Right cardiac atrium (tissue), 5 donors: ENCODE measurements at regions of chr11 and their contacts with region 1.

Region 1: DNA sequence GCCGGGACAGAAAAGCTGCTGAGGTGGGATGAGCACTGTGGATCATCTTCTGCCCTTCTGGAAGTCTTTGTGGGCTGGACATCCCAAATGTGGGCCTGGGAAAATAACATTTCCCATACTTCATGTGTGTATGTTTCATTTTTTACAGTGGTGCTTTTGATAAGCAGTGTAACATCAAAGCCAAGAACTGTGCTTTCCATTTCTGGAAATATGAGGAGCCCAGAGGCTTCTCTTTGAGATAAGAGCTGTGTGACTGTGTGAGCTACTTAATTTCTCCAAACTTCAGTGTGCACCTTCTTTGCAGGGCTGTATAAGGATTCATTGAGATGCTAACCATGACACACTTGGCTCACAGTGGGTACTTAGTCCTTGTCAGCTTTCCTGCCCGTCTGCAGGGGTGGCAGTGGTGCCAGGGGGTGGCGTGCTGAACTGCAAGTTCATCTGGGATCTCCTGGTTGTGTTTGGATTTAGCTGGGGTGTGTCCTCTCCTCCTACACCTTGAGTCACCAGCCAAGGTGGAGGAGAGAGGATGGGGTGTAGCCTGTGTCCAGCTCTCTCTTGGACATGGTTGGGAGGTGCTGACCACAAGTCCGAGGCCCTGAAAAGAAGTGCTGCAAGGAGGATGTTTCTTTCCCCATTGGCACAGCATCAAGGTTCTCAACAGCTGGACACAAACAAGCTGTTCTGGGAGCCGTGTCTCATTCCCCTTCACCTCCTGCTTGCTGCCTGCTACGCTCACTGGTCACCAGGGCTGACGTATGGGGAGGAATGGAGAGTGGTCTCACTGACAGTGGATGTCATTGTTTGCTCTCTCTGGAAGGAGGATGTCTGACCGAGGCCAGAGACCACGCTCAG is 139.4 kb downstream of the TEAD1 start:
- DNase-seq: peak; percentile 41 to 69 (median 61)
- ATAC-seq: peak; percentile 28 to 49
- H3K4me3 ChIP-seq: no peak overlapping the region
- H3K27ac ChIP-seq: peak overlapping the region; percentile 43
- H3K4me1 ChIP-seq: peaks cover 40% of the 10 kb centered on the region
- H3K27me3 ChIP-seq: no peaks in the 10 kb centered on the region

Region 2: DNA sequence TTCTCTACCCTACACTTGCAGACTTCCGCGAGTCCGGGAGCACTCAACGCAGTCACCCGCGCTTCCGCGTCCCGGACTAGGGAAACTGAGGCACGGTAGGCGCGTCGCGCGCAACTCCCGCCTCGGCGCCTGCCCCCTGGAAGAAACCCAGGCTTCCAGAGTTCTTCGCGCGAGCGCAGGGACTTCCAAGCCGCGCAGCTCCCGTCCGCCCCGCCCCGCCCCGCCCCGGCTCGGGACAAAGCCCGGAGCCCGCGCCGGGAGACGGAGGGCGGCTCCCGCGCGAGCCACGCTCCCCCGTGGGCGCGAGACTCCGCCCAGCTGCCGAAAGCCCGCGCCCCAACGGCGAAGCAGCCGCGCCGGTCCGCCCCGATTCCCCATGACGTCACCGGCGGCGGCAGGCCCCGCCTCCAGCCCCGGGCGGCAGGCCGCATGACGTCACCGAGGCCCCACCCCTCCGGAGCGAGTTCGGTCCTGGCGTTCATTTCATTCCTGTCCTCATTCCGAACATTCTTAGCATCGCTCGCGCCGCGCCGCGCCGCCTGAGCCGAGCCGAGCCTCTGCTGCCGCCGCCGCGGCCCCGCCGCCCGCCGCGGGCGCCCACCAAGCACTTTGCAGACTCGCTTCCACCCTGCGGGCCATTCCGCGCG is 139.6 kb before region 1 on chr11 and contains the start of gene TEAD1:
- intact Hi-C with region 1: loop called in 1 of 4 experiments (anchors 5 kb)
- DNase-seq: peak; percentile 96 to 99 (median 98)
- ATAC-seq: peak; percentile 98
- H3K4me3 ChIP-seq: peak within 1 kb of the TSS; percentile 92
- H3K27ac ChIP-seq: peak within 1 kb of the TSS; percentile 93
- H3K4me1 ChIP-seq: no peaks in the 10 kb centered on the region
- H3K27me3 ChIP-seq: no peaks in the 10 kb centered on the region
- total RNA-seq, gene TEAD1: 81.3 to 105 (median 98.4) TPM

Region 3: GRCh38 chr11:12693479-12694181 is 120.0 kb before region 1 on chr11:
- intact Hi-C with region 1: loop called in 1 of 4 experiments (anchors 10 kb)
- DNase-seq: peak; percentile 35 to 74 (median 65)
- ATAC-seq: peak; percentile 79 to 91
- H3K4me3 ChIP-seq: peak overlapping the region; percentile 48
- H3K27ac ChIP-seq: peak overlapping the region; percentile 99
- H3K4me1 ChIP-seq: peaks cover 29% of the 10 kb centered on the region
- H3K27me3 ChIP-seq: no peaks in the 10 kb centered on the region